ENCODE measurements at regions of chr1 and their contacts with region 1.

Region 1: DNA sequence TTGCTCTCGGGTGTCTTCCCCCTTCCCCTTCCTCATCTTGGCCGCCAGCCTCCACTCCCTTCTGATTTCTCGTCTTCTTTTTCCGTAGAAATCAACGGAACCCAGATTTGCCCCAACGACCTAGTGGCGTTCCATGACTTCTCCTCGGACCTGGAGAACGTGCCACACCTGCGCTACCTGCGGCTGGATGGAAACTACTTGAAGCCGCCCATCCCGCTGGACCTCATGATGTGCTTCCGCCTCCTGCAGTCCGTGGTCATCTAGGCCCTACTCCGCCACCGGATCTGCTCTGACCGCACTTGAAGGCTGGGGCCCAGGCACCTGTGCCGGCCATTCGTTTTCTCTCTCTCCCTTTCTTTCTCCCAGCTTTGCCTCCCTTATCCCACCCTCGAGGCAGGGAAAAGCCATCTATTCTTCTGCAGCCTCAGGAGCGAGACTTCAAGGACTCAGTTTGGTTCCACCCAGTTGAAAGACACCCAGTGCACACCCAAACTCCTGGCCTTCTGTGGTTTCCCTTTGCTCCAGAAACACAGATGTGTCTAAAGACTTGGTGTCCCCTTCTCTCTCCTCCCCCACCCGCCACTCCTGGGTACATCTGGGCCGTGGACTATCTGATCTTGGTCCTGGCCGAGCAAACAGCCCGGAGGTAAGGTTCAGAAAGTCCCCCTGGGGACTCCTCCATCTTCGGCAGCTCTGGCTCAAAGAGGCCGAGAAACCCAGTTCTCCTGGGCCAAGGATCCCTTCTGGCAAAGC is 7.2 kb upstream of the OPTC start:
- DNase-seq: no peak
- ATAC-seq: peak; percentile 7; the same call in 2 of the 3 replicates
- H3K4me3 ChIP-seq: no peak overlapping the region
- H3K27ac ChIP-seq: no peak overlapping the region
- H3K4me1 ChIP-seq: 0 out of 2 replicates have a peak, but pooled peaks cover 3% of the 10 kb centered on the region
- H3K27me3 ChIP-seq: peaks cover 0 to 10% of the 10 kb centered on the region in 2 experiments; a peak in 2 of 4 replicates
- CTCF ChIP-seq: no peak
- EP300 ChIP-seq: no peak
- POLR2A ChIP-seq: no peak
- RAD21 ChIP-seq: no peak

Region 2: GRCh38 chr1:203361945-203362719 is 124.7 kb before region 1 on chr1:
- CTCF ChIA-PET with region 1: interaction called, 15 read pairs
- POLR2A ChIA-PET with region 1: no interaction called
- RAD21 ChIA-PET with region 1: interaction called, 3 read pairs
- SMC1A ChIA-PET with region 1: interaction called, 6 read pairs
- in situ Hi-C with region 1: no loop called
- intact Hi-C with region 1: no loop called
- DNase-seq: no peak
- ATAC-seq: peak; percentile 91
- H3K4me3 ChIP-seq: no peak overlapping the region
- H3K27ac ChIP-seq: no peak overlapping the region
- H3K4me1 ChIP-seq: no peaks in the 10 kb centered on the region
- H3K27me3 ChIP-seq: peaks cover 0 to 5% of the 10 kb centered on the region in 2 experiments; a peak in 3 of 4 replicates
- CTCF ChIP-seq: no peak
- EP300 ChIP-seq: no peak
- POLR2A ChIP-seq: no peak
- RAD21 ChIP-seq: no peak

Region 3: GRCh38 chr1:203440771-203441170 is 46.0 kb before region 1 on chr1:
- CTCF ChIA-PET with region 1: interaction called, 37 read pairs
- POLR2A ChIA-PET with region 1: interaction called, 3 read pairs
- RAD21 ChIA-PET with region 1: interaction called, 19 read pairs
- SMC1A ChIA-PET with region 1: interaction called, 7 read pairs
- in situ Hi-C with region 1: no loop called
- intact Hi-C with region 1: loop called (anchors 5 kb)
- DNase-seq: no peak
- ATAC-seq: peak; percentile 95
- H3K4me3 ChIP-seq: no peak overlapping the region
- H3K27ac ChIP-seq: no peak overlapping the region
- H3K4me1 ChIP-seq: no peaks in the 10 kb centered on the region
- H3K27me3 ChIP-seq: peaks cover 0 to 3% of the 10 kb centered on the region in 2 experiments; a peak in 2 of 4 replicates
- CTCF ChIP-seq: peak; percentile 31 to 77 (median 52); a peak in 4 of 6 replicates
- EP300 ChIP-seq: no peak
- POLR2A ChIP-seq: no peak
- RAD21 ChIP-seq: peak; percentile 82

Region 4: DNA sequence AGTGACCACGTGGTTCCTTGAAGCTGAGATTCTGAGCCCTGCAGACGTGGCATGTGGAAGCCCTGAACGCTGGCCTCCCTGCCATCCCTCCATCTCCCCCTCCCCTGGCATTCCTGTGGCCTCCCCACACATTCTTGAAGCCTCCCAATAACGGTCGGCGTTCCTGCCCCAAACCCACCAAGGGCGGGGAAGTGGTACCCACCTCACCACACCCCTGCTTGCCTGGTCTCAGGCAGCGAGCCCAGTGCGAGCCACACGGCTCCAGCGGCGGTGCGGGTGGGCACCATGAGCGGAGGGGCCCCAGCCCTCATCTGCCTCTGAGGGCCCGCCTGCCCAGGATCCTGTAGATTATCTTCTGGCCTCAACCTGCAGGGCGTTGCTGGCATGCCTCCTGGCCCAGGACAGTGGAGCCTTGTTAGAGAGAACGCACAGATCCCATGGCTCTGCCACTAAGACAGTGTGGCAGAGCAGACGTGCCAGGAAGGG is 31.8 kb before region 1 on chr1:
- CTCF ChIA-PET with region 1: interaction called, 33 read pairs
- POLR2A ChIA-PET with region 1: no interaction called
- RAD21 ChIA-PET with region 1: interaction called, 6 read pairs
- SMC1A ChIA-PET with region 1: interaction called, 4 read pairs
- in situ Hi-C with region 1: no loop called
- intact Hi-C with region 1: no loop called
- DNase-seq: no peak
- ATAC-seq: no peak
- H3K4me3 ChIP-seq: no peak overlapping the region
- H3K27ac ChIP-seq: no peak overlapping the region
- H3K4me1 ChIP-seq: peaks cover 3% of the 10 kb centered on the region; the same call in 1 of the 2 replicates
- H3K27me3 ChIP-seq: no peaks in the 10 kb centered on the region
- CTCF ChIP-seq: no peak
- EP300 ChIP-seq: no peak
- POLR2A ChIP-seq: no peak
- RAD21 ChIP-seq: no peak

Region 5: GRCh38 chr1:203475012-203475981 is 11.5 kb before region 1 on chr1 and contains the start of gene PRELP:
- CTCF ChIA-PET with region 1: interaction called, 80 read pairs
- POLR2A ChIA-PET with region 1: interaction called, 3 read pairs
- RAD21 ChIA-PET with region 1: interaction called, 17 read pairs
- SMC1A ChIA-PET with region 1: interaction called, 11 read pairs
- in situ Hi-C with region 1: no loop called
- intact Hi-C with region 1: no loop called
- DNase-seq: no peak
- ATAC-seq: no peak
- H3K4me3 ChIP-seq: no peak within 1 kb of the TSS
- H3K27ac ChIP-seq: no peak within 1 kb of the TSS
- H3K4me1 ChIP-seq: peaks cover 9% of the 10 kb centered on the region; the same call in 1 of the 2 replicates
- H3K27me3 ChIP-seq: peaks cover 2 to 6% of the 10 kb centered on the region in 2 experiments; a peak in 2 of 4 replicates
- CTCF ChIP-seq: no peak
- EP300 ChIP-seq: no peak
- POLR2A ChIP-seq: no peak
- RAD21 ChIP-seq: no peak
- polyA plus RNA-seq, gene PRELP: not detected

Measured in GM12878 (cell line).